Common myeloid progenitor, CD34-positive (primary cell): ENCODE measurements at regions of chr12 and their contacts with region 1.

Region 1: GRCh38 chr12:10012630-10013330 is 2.4 kb downstream of the CLEC12B start:
- DNase-seq: no peak
- H3K4me3 ChIP-seq: no peak overlapping the region
- H3K27ac ChIP-seq: no peak overlapping the region
- H3K4me1 ChIP-seq: peaks cover 0 to 15% (median 8%) of the 10 kb centered on the region in 4 experiments
- H3K27me3 ChIP-seq: no peaks in the 10 kb centered on the region

Region 2: GRCh38 chr12:9940375-9940774 is 72.4 kb before region 1 on chr12:
- CTCF ChIA-PET with region 1: interaction called, 39 read pairs
- POLR2A ChIA-PET with region 1: no interaction called
- DNase-seq: peak; percentile 62 to 70 (median 69)
- H3K4me3 ChIP-seq: no peak overlapping the region
- H3K27ac ChIP-seq: no peak overlapping the region
- H3K4me1 ChIP-seq: peaks cover 0 to 16% (median 9%) of the 10 kb centered on the region in 4 experiments
- H3K27me3 ChIP-seq: no peaks in the 10 kb centered on the region

Region 3: GRCh38 chr12:10001171-10001776 is 11.5 kb before region 1 on chr12:
- CTCF ChIA-PET with region 1: interaction called, 23 read pairs
- POLR2A ChIA-PET with region 1: no interaction called
- DNase-seq: peak in 1 of 3 donors; percentile 12
- H3K4me3 ChIP-seq: no peak overlapping the region
- H3K27ac ChIP-seq: no peak overlapping the region
- H3K4me1 ChIP-seq: peaks cover 0 to 15% (median 3%) of the 10 kb centered on the region in 4 experiments
- H3K27me3 ChIP-seq: no peaks in the 10 kb centered on the region

Region 4: DNA sequence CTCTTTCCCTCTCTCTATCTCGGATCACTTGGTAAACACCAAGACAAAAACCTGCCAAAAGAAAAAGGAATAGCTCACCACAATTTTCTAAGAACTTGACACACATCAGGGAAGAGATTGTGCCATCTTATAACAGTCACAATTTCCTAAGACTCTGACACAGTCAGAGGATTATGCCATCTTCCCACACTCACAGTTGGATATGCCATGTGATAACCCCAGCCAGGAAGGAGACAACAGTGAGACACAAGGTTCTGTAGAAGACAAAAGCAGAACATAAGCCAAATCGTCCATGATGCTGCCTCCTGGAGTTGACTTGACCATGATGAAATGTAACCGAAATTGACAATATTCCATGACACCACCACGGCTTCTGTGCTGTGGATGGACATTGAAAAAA is 14.9 kb after region 1 on chr12:
- CTCF ChIA-PET with region 1: interaction called, 10 read pairs
- POLR2A ChIA-PET with region 1: no interaction called
- DNase-seq: peak in 2 of 3 donors; percentile 57 to 63
- H3K4me3 ChIP-seq: no peak overlapping the region
- H3K27ac ChIP-seq: no peak overlapping the region
- H3K4me1 ChIP-seq: peaks cover 0 to 17% (median 3%) of the 10 kb centered on the region in 4 experiments
- H3K27me3 ChIP-seq: no peaks in the 10 kb centered on the region